Esophagus squamous epithelium (tissue), 5 donors: ENCODE measurements at regions of chr12 and their contacts with region 1.

Region 1: GRCh38 chr12:76356094-76356493 is 7.9 kb upstream of the BBS10 start:
- DNase-seq: no peak
- H3K4me3 ChIP-seq: no peak overlapping the region
- H3K27ac ChIP-seq: no peak overlapping the region
- H3K4me1 ChIP-seq: no peaks in the 10 kb centered on the region
- H3K27me3 ChIP-seq: no peaks in the 10 kb centered on the region
- CTCF ChIP-seq: no peak
- POLR2A ChIP-seq: no peak

Region 2: DNA sequence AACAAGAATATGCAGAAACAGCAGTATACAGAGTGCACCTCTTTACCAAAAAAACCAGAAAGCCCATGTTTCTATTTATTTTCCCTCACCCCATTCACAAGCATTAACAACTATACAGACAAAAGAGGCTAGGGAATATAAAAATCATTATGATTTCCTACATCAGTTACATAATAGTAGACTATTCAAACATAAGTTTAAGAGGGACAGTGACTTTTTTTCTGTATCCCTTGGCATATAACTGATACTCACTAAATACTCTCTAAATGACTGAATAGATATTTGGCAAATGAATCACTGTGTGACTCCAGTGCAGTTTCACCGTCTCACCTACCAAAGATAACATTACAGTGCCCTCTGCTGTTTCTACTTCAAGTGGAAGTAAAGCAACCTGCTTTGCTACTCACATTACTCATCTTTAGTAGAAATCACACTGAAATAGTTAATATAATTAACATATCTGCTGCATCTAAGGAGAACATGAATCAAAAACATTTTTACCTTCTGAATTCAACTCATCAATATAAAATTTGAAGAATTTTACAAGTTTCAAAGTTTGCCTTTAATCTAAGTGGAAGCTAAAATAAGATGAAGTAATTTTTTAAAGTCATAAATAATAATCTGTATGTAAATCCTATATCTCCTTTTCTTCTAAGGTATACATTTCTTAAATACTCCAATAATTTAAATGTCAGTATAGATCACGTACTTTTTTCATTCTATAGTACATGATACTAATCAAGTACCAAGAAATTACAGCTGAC is 99.7 kb after region 1 on chr12:
- intact Hi-C with region 1: loop called (anchors 10 kb)
- DNase-seq: no peak
- H3K4me3 ChIP-seq: no peak overlapping the region
- H3K27ac ChIP-seq: peak overlapping the region in 2 of 4 donors; percentile 4 to 38
- H3K4me1 ChIP-seq: peaks cover 0 to 20% (median 0%) of the 10 kb centered on the region in 3 donors
- H3K27me3 ChIP-seq: no peaks in the 10 kb centered on the region
- CTCF ChIP-seq: peak in 5 of 6 experiments; percentile 36 to 80 (median 62)
- POLR2A ChIP-seq: no peak